HAP-1 (cell line): ENCODE measurements at regions of chr3 and their contacts with region 1.

Region 1: DNA sequence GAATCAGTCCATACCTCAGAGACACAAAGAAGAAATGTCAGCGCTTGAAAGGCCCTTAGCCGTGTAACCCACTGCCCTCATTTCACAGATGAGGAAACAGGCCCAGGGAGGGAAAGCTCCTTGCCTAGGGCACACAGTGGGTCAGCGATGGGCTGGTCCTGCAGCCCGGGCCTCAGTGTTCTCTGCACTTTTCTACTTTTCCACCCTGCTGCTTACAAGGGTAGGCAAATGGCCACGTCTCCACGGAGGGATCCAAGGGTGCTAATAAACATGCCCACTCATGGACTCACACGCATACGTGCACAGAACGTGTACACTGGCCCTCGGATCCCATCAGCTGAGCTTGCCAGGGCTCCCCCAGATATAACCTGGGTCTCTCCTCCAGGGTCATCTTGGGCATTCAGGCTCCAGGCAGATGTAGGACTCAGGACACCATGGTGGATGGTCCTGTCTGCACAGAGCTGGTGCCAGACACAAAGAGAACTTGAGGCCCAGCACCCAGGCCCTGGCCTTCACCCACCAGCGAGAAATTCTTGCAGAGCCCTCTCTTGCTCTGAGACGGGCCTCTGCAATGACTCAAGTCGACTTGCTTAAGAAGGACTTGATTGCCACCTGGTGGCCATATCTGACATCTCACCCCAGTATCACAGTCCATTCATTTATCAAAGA is 34.5 kb upstream of the VPS8 start:
- DNase-seq: peak; percentile 85 to 94
- H3K4me3 ChIP-seq: no peak overlapping the region
- H3K4me1 ChIP-seq: no peaks in the 10 kb centered on the region; the same call in 1 of the 2 replicates
- H3K27me3 ChIP-seq: no peaks in the 10 kb centered on the region

Region 2: GRCh38 chr3:183018421-183019192 is 1758.9 kb before region 1 on chr3:
- in situ Hi-C with region 1: no loop called
- DNase-seq: no peak
- H3K4me3 ChIP-seq: no peak overlapping the region
- H3K4me1 ChIP-seq: peaks cover 9% of the 10 kb centered on the region
- H3K27me3 ChIP-seq: no peaks in the 10 kb centered on the region

Region 3: DNA sequence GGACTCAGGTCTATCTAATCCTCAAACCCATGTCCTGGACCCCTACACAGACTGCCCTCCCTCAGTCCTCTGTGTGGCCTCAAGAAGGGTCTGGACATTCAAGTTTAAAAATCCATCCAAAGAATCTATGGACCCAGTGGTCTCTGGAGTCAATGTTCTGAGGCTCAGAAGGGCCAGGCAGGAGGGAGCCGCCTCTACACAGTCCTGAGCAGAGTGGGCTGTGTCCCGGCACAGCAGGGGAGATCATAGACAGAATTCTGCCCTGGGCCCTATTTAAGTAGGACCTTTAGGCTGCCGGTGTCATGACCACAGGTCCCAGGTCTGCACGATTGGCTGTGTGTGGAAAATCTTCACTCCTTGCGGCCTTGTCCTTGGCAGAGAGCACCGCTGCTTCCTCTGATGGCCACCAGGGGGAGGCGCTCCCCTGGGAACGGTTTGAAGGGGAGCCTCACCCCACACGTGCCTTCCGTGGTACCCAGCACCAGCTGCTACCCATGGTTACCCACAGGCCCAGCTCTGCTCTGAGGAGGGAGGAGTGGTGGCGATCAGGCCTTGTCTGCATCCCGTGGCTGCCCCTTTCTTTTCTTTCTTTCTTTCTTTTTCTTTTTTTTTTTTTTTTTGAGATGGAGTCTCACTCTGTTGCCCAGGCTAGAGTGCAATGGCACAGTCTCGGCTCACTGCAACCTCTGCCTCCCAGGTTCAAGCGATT is 359.7 kb before region 1 on chr3:
- in situ Hi-C with region 1: loop called (anchors 25 kb)
- DNase-seq: peak; percentile 68 to 82
- H3K4me3 ChIP-seq: no peak overlapping the region
- H3K4me1 ChIP-seq: no peaks in the 10 kb centered on the region
- H3K27me3 ChIP-seq: no peaks in the 10 kb centered on the region